Gastrocnemius medialis (tissue), 4 donors: ENCODE measurements at regions of chr19 and their contacts with region 1.

Region 1: GRCh38 chr19:46021531-46022041 is 1.3 kb downstream of the PGLYRP1 start:
- DNase-seq: no peak
- ATAC-seq: no peak
- H3K4me3 ChIP-seq: no peak overlapping the region
- H3K27ac ChIP-seq: no peak overlapping the region
- H3K4me1 ChIP-seq: peaks cover 0 to 5% of the 10 kb centered on the region in 2 donors
- H3K27me3 ChIP-seq: peaks cover 42 to 43% (median 42%) of the 10 kb centered on the region in 3 donors
- CTCF ChIP-seq: no peak
- POLR2A ChIP-seq: no peak

Region 2: DNA sequence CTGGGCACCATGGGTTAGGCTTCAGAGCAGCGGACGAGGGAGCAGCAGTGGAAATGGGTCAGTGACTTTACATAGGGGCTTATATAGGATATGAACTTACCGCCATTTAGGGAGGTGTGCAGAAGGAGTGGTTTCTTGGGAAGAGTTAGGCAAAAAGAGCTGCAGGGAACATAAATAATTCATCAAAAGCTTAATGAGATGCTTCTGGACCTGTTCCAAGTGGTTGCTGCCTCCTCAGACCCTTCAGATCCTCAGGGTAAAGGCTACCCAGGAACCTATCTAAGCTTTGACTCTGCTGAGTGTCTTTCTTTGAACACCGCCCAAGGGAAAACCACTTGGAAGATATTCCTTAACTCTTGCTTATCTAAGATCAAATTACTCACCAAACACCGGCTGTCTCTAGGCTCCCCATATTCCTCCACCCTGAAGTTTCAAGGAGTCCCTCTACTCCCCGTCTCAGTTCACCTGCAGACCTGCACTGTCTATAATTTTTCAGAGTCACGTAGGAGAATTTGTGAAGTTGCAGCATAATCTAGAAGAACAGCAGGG is 19.4 kb after region 1 on chr19 and contains the start of gene IGFL4:
- in situ Hi-C with region 1: no loop called
- intact Hi-C with region 1: no loop called
- DNase-seq: no peak
- ATAC-seq: no peak
- H3K4me3 ChIP-seq: no peak within 1 kb of the TSS
- H3K27ac ChIP-seq: no peak within 1 kb of the TSS
- H3K4me1 ChIP-seq: no peaks in the 10 kb centered on the region
- H3K27me3 ChIP-seq: peaks cover 14 to 18% (median 15%) of the 10 kb centered on the region in 3 donors
- CTCF ChIP-seq: no peak
- POLR2A ChIP-seq: no peak
- total RNA-seq, gene IGFL4: not detected

Region 3: DNA sequence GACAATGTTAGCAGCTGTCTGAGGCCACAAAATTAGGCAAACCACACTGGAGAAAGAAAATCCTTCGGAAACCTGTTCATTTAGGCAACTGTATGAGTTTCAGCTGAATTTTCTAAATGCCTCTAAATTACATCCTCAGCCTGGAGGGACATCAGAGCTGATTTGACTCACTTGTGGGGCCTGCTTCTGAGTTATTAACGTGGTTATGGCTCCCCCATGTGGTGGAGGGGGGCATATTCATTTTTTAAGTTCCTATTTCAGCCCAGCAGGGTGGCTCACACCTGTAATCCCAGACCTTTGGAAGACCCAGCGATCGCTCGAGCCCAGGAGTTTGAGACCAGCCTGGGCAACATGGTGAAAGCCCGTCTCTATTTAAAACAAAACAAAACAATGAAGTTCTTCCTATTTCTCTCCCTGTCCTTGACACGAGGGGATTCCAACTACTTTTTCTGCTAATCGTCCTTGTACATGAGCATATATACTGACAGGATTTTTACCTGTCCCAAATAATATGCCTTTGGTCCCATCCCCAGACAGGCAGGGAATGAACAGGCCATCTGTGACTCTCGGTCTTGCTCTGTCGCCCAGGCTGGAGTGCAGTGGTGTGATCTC is 243.7 kb after region 1 on chr19:
- in situ Hi-C with region 1: loop called (anchors 5 to 10 kb)
- intact Hi-C with region 1: no loop called
- DNase-seq: peak; percentile 20 to 40
- ATAC-seq: peak; percentile 76 to 79
- H3K4me3 ChIP-seq: no peak overlapping the region
- H3K27ac ChIP-seq: no peak overlapping the region
- H3K4me1 ChIP-seq: no peaks in the 10 kb centered on the region
- H3K27me3 ChIP-seq: peaks cover 4 to 7% (median 6%) of the 10 kb centered on the region in 3 donors
- CTCF ChIP-seq: peak; percentile 74 to 84 (median 79)
- POLR2A ChIP-seq: no peak